ENCODE measurements at regions of chr19 and their contacts with region 1.

Region 1: GRCh38 chr19:48391107-48391986 is at the start of gene KDELR1:
- DNase-seq: peak; percentile 77
- H3K4me3 Mint-ChIP-seq: peak within 1 kb of the TSS; percentile 92
- H3K27ac Mint-ChIP-seq: peak within 1 kb of the TSS; percentile 88
- H3K4me1 Mint-ChIP-seq: peaks cover 28% of the 10 kb centered on the region
- H3K27me3 Mint-ChIP-seq: peaks cover 36% of the 10 kb centered on the region
- total RNA-seq, gene KDELR1: 91.8 to 94.4 TPM

Region 2: GRCh38 chr19:48110350-48110966 is 280.9 kb before region 1 on chr19 and contains the start of gene PLA2G4C:
- CTCF ChIA-PET with region 1: no interaction called
- POLR2A ChIA-PET with region 1: no interaction called
- DNase-seq: peak; percentile 83
- H3K4me3 Mint-ChIP-seq: peak within 1 kb of the TSS; percentile 77
- H3K27ac Mint-ChIP-seq: peak within 1 kb of the TSS; percentile 74
- H3K4me1 Mint-ChIP-seq: peaks cover 25% of the 10 kb centered on the region
- H3K27me3 Mint-ChIP-seq: no peaks in the 10 kb centered on the region
- total RNA-seq, gene PLA2G4C: 10.8 to 11.5 TPM

Region 3: DNA sequence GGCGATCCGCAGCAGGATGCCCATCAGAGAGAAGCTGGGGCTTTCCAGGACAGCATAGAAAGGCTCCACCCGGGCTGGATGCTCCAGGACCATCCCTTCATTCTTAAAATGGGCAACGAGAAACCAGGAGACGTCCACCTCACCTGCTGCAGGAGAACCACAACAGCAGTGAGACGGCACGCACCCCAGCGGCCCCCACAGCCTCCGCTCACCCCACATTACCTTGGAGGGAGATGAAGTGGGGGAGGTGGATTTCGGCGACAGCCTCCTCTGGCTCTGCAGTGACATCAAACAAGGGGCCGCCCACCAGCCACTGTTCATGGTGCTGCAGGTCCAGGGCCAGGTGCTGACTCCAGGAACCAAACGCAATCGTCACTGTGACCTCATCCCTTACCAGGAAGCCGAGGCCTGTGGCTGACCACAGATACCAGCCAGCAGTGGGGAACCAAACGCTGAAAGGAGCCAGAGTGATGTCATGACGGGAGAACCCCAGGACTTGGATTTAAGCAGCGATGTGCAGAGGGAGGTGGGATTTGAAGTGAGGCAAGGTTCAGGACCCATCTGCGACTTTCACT is 160.7 kb before region 1 on chr19:
- CTCF ChIA-PET with region 1: no interaction called
- POLR2A ChIA-PET with region 1: no interaction called
- DNase-seq: peak; percentile 70
- H3K4me3 Mint-ChIP-seq: no peak overlapping the region
- H3K27ac Mint-ChIP-seq: peak overlapping the region; percentile 48
- H3K4me1 Mint-ChIP-seq: peaks cover 36% of the 10 kb centered on the region
- H3K27me3 Mint-ChIP-seq: no peaks in the 10 kb centered on the region

Region 4: GRCh38 chr19:48321622-48322591 is 69.4 kb before region 1 on chr19:
- CTCF ChIA-PET with region 1: interaction called, 11 read pairs
- POLR2A ChIA-PET with region 1: interaction called, 3 read pairs
- DNase-seq: peak; percentile 100
- H3K4me3 Mint-ChIP-seq: peak overlapping the region; percentile 83
- H3K27ac Mint-ChIP-seq: peak overlapping the region; percentile 98
- H3K4me1 Mint-ChIP-seq: peaks cover 58% of the 10 kb centered on the region
- H3K27me3 Mint-ChIP-seq: no peaks in the 10 kb centered on the region

Region 5: DNA sequence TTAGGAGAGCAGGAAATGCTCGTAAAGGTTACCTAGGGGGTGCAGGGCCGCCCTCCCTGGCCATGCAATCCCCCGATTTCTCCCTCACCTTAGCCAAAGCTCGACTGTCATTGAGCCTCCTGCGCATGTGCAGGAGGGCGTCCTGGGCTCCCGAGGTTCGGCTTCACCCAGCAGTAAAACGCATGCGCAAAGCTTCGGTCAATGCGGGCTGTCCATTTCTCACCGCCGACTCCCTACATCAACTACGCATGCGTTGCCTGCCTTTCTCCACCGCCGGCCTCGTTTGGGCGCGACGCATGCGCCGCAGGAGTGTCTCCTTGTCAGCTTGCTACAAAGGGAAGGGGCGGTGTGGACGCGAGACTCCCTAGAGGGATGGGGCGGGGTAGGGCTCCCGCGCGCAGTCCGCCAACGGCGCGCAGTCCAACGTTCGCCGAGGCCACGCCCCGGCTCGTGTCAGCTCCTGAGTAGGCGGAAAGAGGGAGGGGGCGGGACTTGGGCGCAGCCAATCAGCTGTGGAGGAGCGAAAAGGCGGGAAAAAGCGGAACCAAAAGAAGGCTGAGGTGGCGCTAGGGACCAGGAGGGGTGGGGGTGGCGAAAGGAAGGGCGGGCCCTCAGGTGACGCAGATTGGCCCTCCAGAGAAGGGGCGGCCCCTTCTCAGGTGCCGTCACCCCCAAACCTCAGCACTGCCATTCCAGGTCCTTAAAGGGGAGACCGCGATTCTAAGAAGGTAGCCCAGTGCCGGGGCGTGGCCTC is 27.4 kb before region 1 on chr19 and contains the starts of genes SYNGR4 and TMEM143:
- CTCF ChIA-PET with region 1: interaction called, 53 read pairs
- POLR2A ChIA-PET with region 1: interaction called, 48 read pairs
- DNase-seq: peak; percentile 99
- H3K4me3 Mint-ChIP-seq: peak within 1 kb of the TSS; percentile 82
- H3K27ac Mint-ChIP-seq: peak within 1 kb of the TSS; percentile 95
- H3K4me1 Mint-ChIP-seq: peaks cover 22% of the 10 kb centered on the region
- H3K27me3 Mint-ChIP-seq: no peaks in the 10 kb centered on the region
- total RNA-seq, gene SYNGR4: 0.28 TPM in 1 of 2 experiments, not detected in the other
- total RNA-seq, gene TMEM143: 17.4 to 18.2 TPM

Region 6: GRCh38 chr19:48413879-48414587 is 22.7 kb after region 1 on chr19:
- CTCF ChIA-PET with region 1: interaction called, 12 read pairs
- POLR2A ChIA-PET with region 1: interaction called, 4 read pairs
- DNase-seq: no peak
- H3K4me3 Mint-ChIP-seq: no peak overlapping the region
- H3K27ac Mint-ChIP-seq: no peak overlapping the region
- H3K4me1 Mint-ChIP-seq: peaks cover 31% of the 10 kb centered on the region
- H3K27me3 Mint-ChIP-seq: peaks cover 23% of the 10 kb centered on the region